HCT116 (cell line): ENCODE measurements at regions of chr5 and their contacts with region 1.

Region 1: DNA sequence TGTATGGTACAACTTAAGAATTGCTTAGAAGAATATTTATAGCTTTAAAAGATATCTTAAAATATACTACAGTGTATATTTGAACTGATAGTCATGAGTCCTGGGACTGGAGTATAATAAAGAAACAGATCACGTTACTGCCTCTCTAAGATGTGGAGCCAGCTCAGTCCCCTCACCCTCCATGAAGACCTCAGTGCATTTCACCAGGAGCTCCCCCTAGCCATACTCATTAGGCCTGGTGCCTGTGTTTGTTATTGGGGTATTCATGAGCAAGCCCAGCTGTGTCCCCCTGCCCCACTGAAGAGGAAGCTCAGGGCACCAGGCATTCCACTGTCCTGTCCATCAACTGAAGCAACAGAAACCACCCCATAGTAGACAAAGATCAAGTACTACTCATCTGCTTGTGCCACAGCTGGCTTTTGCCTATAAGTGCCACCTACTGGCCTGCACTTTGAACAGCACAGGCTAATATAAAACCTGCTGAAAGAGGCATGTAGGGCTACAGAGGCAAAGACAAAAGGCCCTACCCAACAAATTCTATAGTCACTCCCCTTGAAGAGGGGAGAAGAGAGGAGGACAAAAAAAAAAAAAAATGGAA is 850.2 kb upstream of the NUDT12 start:
- DNase-seq: peak; percentile 21
- ATAC-seq: peak; percentile 97
- H3K4me3 ChIP-seq: no peak overlapping the region
- H3K27ac ChIP-seq: no peak overlapping the region
- H3K4me1 ChIP-seq: no peaks in the 10 kb centered on the region
- H3K27me3 ChIP-seq: no peaks in the 10 kb centered on the region
- CTCF ChIP-seq: peak; percentile 47 to 77 (median 75); a peak in 5 of 6 replicates
- POLR2A ChIP-seq: no peak
- RAD21 ChIP-seq: peak; percentile 58

Region 2: DNA sequence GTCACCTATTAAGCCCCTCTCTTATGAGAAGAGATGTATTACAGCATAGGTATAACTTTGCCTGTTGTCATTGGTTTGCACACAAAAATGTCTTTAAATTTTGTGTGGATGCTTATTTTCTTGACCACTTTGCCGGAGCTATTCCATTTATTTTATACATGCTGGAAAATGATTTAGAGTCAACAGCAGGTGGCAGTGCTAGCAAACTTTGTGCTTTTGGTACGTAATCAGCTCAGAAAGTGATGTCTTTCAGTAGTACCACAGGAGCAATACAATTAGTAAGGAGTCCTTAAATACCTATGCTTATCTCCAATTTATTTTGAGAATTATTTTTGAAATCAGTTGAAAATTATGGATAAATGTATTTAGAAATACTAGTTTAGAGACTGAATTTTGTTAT is 830.4 kb before region 1 on chr5:
- CTCF ChIA-PET with region 1: interaction called, 6 read pairs
- POLR2A ChIA-PET with region 1: no interaction called
- RAD21 ChIA-PET with region 1: no interaction called
- intact Hi-C with region 1: loop called (anchors 10 kb)
- DNase-seq: peak; percentile 53
- ATAC-seq: peak; percentile 70
- H3K4me3 ChIP-seq: no peak overlapping the region
- H3K27ac ChIP-seq: no peak overlapping the region
- H3K4me1 ChIP-seq: no peaks in the 10 kb centered on the region
- H3K27me3 ChIP-seq: no peaks in the 10 kb centered on the region
- CTCF ChIP-seq: peak; percentile 37 to 68 (median 47); a peak in 5 of 6 replicates
- POLR2A ChIP-seq: no peak
- RAD21 ChIP-seq: peak; percentile 73

Region 3: DNA sequence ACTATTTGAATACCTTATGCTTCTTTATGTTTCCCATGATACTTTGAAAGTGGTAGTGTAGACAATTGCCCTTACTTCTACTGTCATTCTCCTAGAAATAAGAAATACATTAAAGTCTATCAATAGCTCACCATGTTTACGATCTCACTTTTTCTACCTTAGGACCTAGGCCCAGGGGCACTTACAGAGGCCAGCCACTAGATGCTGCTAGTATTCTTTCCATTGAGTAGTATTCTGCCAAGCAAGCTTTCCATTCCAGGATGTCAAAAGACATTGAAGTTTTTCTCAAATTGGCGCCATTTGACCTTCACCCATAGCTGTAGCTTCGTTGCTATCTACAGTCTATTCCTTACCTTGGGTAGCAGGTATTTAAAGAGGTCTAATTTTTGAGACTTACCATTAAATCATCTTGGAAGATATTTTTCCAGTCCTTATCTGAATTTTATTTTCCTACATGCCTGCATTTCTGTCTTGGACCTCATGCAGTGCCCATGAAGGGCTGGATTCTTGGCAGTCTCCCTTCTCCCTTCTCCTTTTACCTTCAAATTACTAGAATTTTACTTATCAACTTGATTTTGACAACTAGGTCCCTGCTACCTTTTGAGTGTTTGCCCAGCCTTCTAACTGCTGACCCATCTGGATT is 604.2 kb before region 1 on chr5:
- CTCF ChIA-PET with region 1: interaction called, 8 read pairs
- POLR2A ChIA-PET with region 1: no interaction called
- RAD21 ChIA-PET with region 1: no interaction called
- intact Hi-C with region 1: loop called (anchors 2 kb)
- DNase-seq: peak; percentile 61
- ATAC-seq: peak; percentile 99
- H3K4me3 ChIP-seq: no peak overlapping the region
- H3K27ac ChIP-seq: no peak overlapping the region
- H3K4me1 ChIP-seq: peaks cover 0 to 5% of the 10 kb centered on the region in 2 experiments; a peak in 2 of 4 replicates
- H3K27me3 ChIP-seq: no peaks in the 10 kb centered on the region
- CTCF ChIP-seq: peak; percentile 59 to 99 (median 98); a peak in 5 of 6 replicates
- POLR2A ChIP-seq: no peak
- RAD21 ChIP-seq: peak; percentile 96

Region 4: DNA sequence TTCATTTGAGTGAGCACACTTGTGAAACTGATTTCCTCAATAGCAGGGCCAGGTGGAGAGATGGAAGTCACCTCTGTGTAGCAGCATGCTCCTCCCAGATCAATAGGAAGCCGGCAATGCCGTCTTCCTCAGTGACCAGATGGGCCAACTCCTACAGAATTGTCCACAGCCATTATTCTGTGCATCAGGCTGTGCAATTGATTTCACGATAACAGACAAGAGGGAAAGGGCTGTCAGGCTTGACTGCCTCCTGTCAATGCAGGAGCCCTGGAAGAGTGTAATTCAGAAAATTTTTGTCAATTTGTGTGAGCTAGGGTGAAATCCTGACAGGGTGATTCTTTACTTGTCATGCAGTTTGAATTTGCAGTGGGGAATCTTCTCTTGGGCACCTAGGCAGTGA is 11.8 kb before region 1 on chr5:
- CTCF ChIA-PET with region 1: interaction called, 14 read pairs
- POLR2A ChIA-PET with region 1: no interaction called
- RAD21 ChIA-PET with region 1: no interaction called
- intact Hi-C with region 1: no loop called
- DNase-seq: no peak
- ATAC-seq: no peak
- H3K4me3 ChIP-seq: no peak overlapping the region
- H3K27ac ChIP-seq: no peak overlapping the region
- H3K4me1 ChIP-seq: no peaks in the 10 kb centered on the region
- H3K27me3 ChIP-seq: no peaks in the 10 kb centered on the region
- CTCF ChIP-seq: no peak
- POLR2A ChIP-seq: no peak
- RAD21 ChIP-seq: no peak

Region 5: GRCh38 chr5:104443706-104444105 is 31.0 kb after region 1 on chr5:
- CTCF ChIA-PET with region 1: no interaction called
- POLR2A ChIA-PET with region 1: no interaction called
- RAD21 ChIA-PET with region 1: no interaction called
- intact Hi-C with region 1: no loop called
- DNase-seq: no peak
- ATAC-seq: no peak
- H3K4me3 ChIP-seq: no peak overlapping the region
- H3K27ac ChIP-seq: no peak overlapping the region
- H3K4me1 ChIP-seq: no peaks in the 10 kb centered on the region
- H3K27me3 ChIP-seq: no peaks in the 10 kb centered on the region
- CTCF ChIP-seq: no peak
- POLR2A ChIP-seq: no peak
- RAD21 ChIP-seq: no peak